ENCODE measurements at regions of chr7 and their contacts with region 1.

Region 1: DNA sequence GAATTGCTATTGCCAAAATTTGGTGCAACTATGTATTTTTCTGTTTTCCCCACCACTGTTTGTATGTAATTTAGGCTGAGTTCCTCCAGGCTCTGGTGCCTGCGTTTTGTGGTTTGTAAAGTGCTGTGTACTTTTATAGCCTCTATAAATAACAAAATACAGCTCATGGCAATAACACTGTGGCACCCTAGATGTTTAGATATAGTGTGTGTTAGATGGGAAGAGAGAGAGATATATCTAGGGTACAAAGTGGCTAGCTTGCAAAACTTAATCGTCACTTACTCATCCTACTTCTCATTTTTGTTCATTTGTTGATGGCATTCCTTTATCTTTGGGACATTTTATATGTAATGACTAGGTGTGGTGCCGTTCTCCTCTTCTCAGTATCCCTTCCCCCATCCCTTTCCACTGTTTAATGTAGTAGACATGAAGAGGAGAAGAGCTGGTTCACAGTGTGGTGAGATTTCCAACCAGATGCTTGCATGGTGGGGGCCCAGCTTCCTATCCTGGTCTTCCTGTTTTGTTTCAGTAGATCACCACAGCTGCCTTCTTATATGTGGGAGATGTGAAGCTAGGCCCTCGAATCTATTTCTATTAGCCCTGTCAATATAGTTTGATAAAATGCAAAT is 115.0 kb downstream of the SND1 start:
- DNase-seq: no peak
- CTCF ChIP-seq: no peak

Region 2: GRCh38 chr7:127745445-127745844 is 21.5 kb before region 1 on chr7:
- CTCF ChIA-PET with region 1: no interaction called
- POLR2A ChIA-PET with region 1: no interaction called
- DNase-seq: no peak
- CTCF ChIP-seq: no peak

Region 3: DNA sequence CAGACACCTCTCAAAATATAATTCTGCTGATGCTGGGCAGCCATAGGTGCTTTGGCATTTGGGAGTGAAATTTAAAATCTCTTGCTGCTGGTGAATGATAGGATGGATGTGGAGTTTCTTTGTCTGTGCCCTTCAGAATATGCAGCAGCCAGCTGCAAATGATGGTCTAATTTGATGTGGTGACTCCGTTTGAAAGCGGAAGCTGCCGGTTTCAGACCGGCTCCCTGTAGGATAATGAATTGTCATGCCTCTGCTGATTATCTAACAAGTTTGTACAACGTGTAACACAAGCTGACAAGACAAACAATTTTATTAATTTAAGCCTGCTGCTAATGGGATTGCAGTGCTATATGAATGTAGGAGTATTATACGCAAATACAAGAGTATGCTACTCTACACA is 11.4 kb before region 1 on chr7:
- CTCF ChIA-PET with region 1: interaction called, 17 read pairs
- POLR2A ChIA-PET with region 1: no interaction called
- DNase-seq: no peak
- CTCF ChIP-seq: no peak

Region 4: DNA sequence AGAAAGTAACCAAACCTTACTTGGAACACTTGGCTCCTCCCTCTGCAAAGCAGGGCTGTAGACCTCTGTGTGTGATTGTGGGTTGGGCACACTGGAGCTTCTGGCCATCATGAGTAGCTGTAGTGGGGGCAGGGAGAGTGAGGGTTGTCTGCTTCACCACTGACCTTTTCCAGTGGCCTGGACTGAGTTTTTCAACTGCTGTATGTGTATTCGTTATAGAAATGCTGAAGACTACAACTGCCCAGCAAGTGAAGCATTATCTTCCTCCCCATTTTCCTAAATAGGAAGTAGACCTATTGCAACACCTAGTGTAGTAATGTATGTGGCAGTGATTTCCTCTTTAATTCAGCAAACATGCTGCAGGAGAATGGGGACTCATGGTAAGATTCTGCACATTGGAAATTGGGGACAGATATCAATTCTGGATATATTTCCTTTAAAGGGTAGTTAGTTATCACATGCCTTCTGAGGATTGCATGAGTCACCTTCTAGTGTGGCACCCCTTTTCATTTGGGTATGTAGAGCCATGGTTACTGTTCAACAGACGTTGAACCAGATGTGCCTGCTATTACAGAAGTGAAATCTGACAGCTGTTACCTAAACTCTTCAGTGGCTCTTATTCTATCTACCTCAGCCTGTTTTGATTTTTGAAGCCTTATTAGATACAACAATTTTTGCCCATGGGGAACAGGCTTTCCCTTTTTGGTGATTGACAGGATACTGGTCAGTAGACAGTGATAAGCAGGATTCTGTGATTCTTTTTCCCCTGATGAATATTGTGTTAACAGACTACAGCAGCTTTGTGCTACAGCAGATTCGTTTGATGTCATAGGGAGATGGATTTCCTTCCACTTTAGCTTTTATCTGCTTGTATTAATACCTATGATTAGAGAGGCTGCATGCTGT is 16.0 kb after region 1 on chr7:
- CTCF ChIA-PET with region 1: interaction called, 10 read pairs
- POLR2A ChIA-PET with region 1: no interaction called
- DNase-seq: peak; percentile 18
- CTCF ChIP-seq: no peak

Region 5: DNA sequence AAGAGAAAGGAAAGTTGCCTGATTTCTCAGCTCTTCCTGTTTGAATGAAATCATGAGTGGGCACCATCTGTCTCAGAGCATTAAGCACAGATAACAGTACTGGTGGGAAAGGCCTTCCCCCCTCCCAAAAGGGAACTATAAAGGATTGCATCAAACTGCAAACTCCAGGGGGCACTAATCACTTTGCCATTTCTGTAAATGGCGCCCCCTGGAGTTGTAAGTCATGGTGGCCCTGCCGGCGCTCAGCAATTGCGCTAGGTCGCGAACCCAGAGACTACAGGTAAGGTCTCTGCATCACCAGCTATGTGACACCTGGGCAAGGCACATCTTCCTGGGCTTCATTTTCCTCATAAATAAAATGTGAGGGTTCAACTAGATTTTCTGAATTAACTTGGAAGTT is 253.2 kb after region 1 on chr7:
- CTCF ChIA-PET with region 1: no interaction called
- POLR2A ChIA-PET with region 1: no interaction called
- DNase-seq: no peak
- CTCF ChIP-seq: peak; percentile 19

Region 6: DNA sequence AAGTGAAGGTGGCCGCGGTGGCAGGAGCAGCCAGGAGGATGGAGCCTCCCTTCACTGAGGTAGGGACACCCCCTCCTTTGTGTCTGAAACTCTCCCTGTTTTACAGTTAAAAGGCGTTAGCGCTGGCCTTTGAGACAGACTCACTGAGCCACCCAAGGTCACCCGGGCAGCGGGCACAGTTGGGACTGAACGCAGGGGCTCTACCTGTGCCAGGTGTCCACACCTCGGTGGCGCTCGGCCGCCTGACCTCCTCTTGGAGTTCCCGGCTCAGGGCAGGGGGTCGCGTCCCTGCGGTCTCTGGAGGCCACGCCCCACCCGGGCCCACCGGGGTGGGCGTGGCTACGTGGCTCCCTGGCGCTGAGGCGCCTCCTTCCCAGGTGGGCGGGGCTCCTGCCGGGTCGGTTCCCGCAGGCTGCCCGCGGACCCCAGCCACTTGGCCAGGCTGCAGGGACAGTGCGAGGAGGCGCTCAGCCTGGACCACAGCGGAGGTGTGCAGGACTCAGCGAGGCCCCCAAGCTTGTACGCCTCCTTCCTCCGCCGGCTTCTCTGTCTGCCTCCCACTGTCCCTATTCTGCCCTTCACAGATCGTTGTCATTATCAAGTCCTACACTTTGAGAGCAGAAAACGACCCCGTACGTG is 434.2 kb after region 1 on chr7:
- CTCF ChIA-PET with region 1: no interaction called
- POLR2A ChIA-PET with region 1: no interaction called
- DNase-seq: no peak
- CTCF ChIP-seq: no peak

Measured in GM10248 (cell line).